Colonic mucosa (tissue), 4 donors: ENCODE measurements at regions of chr1 and their contacts with region 1.

Region 1: GRCh38 chr1:114282751-114283403 is 129.2 kb upstream of the SYT6 start:
- DNase-seq: peak; percentile 89
- H3K4me3 ChIP-seq: no peak overlapping the region
- H3K27ac ChIP-seq: no peak overlapping the region
- H3K4me1 ChIP-seq: no peaks in the 10 kb centered on the region
- H3K27me3 ChIP-seq: no peaks in the 10 kb centered on the region
- CTCF ChIP-seq: peak; percentile 88

Region 2: GRCh38 chr1:113978863-113979702 is 303.8 kb before region 1 on chr1 and contains the start of gene OLFML3:
- intact Hi-C with region 1: loop called (anchors 2 kb)
- DNase-seq: peak; percentile 88
- H3K4me3 ChIP-seq: peak within 1 kb of the TSS; percentile 10
- H3K27ac ChIP-seq: peak within 1 kb of the TSS; percentile 65
- H3K4me1 ChIP-seq: peaks cover 5% of the 10 kb centered on the region
- H3K27me3 ChIP-seq: no peaks in the 10 kb centered on the region
- CTCF ChIP-seq: peak; percentile 53
- total RNA-seq, gene OLFML3: 6.1 to 17.4 TPM

Region 3: DNA sequence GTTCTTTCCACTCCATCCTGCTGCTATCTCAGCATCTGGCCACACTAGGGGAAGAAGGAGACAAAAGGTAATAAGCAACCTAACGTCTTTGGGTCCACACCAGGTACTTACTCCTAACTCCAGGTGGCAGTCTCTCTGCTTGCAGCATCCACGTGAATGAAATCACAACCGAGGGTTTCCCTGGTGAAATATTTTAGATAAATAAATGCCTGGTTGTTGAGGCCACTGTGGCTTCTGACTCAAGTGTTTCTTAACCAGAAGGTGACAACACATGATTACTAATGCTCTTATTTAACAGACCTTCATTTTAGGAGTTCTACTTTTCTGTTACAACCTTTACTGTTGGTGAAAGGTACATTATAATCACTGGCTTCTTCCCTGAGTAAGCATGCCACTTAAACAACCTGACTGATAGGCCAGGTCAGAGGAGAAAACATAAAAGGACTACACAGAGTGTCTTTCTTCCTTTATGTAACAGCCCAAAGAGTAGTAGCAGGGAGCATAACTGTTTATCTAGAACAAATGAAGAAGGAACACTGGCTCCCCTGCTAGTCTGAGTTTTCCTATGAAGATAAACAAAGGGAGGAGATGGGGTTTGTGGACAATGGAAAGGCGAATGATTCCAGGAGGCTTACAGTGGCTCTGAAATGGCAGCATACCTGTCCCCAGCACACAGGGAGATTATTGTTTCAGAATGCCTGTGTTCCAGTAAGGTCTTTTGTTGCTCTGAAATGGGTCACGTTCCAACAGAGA is 189.1 kb before region 1 on chr1:
- intact Hi-C with region 1: loop called (anchors 10 kb)
- DNase-seq: no peak
- H3K4me3 ChIP-seq: no peak overlapping the region
- H3K27ac ChIP-seq: no peak overlapping the region
- H3K4me1 ChIP-seq: no peaks in the 10 kb centered on the region
- H3K27me3 ChIP-seq: no peaks in the 10 kb centered on the region
- CTCF ChIP-seq: no peak

Region 4: GRCh38 chr1:114178936-114179335 is 103.9 kb before region 1 on chr1:
- intact Hi-C with region 1: no loop called
- DNase-seq: no peak
- H3K4me3 ChIP-seq: no peak overlapping the region
- H3K27ac ChIP-seq: no peak overlapping the region
- H3K4me1 ChIP-seq: no peaks in the 10 kb centered on the region
- H3K27me3 ChIP-seq: no peaks in the 10 kb centered on the region
- CTCF ChIP-seq: no peak